GM10248 (cell line): ENCODE measurements at regions of chr9 and their contacts with region 1.

Region 1: GRCh38 chr9:72280913-72281500 is 84.0 kb downstream of the ZFAND5 start:
- DNase-seq: peak; percentile 79
- CTCF ChIP-seq: peak; percentile 91

Region 2: GRCh38 chr9:72038890-72039410 is 242.1 kb before region 1 on chr9:
- CTCF ChIA-PET with region 1: interaction called, 193 read pairs
- POLR2A ChIA-PET with region 1: interaction called, 3 read pairs
- DNase-seq: peak; percentile 79
- CTCF ChIP-seq: peak; percentile 95

Region 3: DNA sequence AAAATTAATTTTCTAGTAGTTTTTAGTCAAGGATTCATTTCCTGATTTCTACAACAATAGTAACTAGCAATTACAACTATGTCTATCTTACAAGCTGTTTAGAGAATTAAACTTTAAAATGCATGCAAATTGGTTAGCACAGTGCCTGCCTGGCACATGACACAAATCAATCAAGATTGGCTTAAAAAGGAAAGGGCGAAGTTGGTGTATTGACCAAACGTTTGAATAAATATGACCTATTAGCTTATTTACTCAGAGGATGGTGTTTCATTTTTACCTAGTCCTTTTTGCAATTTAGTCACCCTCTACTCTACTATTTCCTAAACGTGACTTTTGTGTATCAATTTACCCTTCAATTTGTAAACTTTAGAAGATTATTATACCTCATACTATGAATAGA is 48.2 kb before region 1 on chr9:
- CTCF ChIA-PET with region 1: no interaction called
- POLR2A ChIA-PET with region 1: no interaction called
- DNase-seq: no peak
- CTCF ChIP-seq: no peak

Region 4: GRCh38 chr9:72292256-72292682 is 11.3 kb after region 1 on chr9:
- CTCF ChIA-PET with region 1: interaction called, 90 read pairs
- POLR2A ChIA-PET with region 1: no interaction called
- DNase-seq: peak; percentile 43
- CTCF ChIP-seq: peak; percentile 56

Region 5: GRCh38 chr9:72453797-72454196 is 172.8 kb after region 1 on chr9:
- CTCF ChIA-PET with region 1: no interaction called
- POLR2A ChIA-PET with region 1: no interaction called
- DNase-seq: no peak
- CTCF ChIP-seq: no peak

Region 6: GRCh38 chr9:72599879-72600534 is 319.0 kb after region 1 on chr9:
- CTCF ChIA-PET with region 1: interaction called, 129 read pairs
- POLR2A ChIA-PET with region 1: no interaction called
- DNase-seq: no peak
- CTCF ChIP-seq: no peak

Region 7: GRCh38 chr9:73023025-73023541 is 742.1 kb after region 1 on chr9:
- CTCF ChIA-PET with region 1: interaction called, 36 read pairs
- POLR2A ChIA-PET with region 1: no interaction called
- DNase-seq: peak; percentile 14
- CTCF ChIP-seq: peak; percentile 70